ENCODE measurements at regions of chr9 and their contacts with region 1.

Region 1: GRCh38 chr9:77433675-77434445 is 214.3 kb downstream of the GNA14 start:
- DNase-seq: peak; percentile 84
- H3K4me3 ChIP-seq: no peak overlapping the region
- H3K27ac ChIP-seq: no peak overlapping the region
- H3K4me1 ChIP-seq: no peaks in the 10 kb centered on the region
- H3K27me3 ChIP-seq: no peaks in the 10 kb centered on the region
- CTCF ChIP-seq: peak; percentile 87 to 96 (median 92)
- EP300 ChIP-seq: no peak
- POLR2A ChIP-seq: no peak

Region 2: DNA sequence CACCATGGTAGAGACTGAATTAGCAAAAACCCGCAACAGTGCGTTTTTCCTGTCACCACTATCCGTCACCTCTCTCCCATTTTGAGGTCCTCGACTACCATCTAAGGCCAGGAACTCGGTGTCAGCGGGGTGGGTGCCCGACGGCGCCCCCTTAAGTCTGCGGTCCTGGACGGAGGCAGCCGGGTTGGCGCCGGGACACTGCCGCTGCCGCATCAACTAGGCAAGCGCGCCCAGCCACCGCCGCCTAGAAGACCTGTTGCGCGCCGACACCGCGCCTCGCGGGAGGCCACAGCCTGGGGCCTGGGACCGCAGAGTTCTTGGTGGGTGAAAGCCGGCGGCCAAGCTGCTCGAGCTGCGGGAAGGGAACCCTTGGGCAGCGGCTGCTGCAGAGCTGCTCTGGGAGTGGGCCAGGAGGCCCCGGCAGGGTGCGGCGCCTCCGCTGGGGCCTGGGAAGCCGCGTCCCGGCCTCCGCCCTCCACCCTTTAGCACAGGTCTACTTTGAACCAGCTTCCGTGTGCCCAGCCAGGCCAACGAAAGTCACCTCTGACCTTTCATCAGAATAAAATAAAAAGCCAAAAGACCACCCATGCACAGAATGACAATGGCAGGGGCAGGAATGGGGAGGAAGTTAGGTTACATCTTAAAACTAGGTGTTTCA is 410.9 kb before region 1 on chr9:
- intact Hi-C with region 1: no loop called
- DNase-seq: no peak
- H3K4me3 ChIP-seq: no peak overlapping the region
- H3K27ac ChIP-seq: no peak overlapping the region
- H3K4me1 ChIP-seq: peaks cover 0 to 45% (median 41%) of the 10 kb centered on the region in 4 donors
- H3K27me3 ChIP-seq: peaks cover 50 to 98% (median 74%) of the 10 kb centered on the region in 3 donors
- CTCF ChIP-seq: no peak
- EP300 ChIP-seq: no peak
- POLR2A ChIP-seq: no peak

Region 3: DNA sequence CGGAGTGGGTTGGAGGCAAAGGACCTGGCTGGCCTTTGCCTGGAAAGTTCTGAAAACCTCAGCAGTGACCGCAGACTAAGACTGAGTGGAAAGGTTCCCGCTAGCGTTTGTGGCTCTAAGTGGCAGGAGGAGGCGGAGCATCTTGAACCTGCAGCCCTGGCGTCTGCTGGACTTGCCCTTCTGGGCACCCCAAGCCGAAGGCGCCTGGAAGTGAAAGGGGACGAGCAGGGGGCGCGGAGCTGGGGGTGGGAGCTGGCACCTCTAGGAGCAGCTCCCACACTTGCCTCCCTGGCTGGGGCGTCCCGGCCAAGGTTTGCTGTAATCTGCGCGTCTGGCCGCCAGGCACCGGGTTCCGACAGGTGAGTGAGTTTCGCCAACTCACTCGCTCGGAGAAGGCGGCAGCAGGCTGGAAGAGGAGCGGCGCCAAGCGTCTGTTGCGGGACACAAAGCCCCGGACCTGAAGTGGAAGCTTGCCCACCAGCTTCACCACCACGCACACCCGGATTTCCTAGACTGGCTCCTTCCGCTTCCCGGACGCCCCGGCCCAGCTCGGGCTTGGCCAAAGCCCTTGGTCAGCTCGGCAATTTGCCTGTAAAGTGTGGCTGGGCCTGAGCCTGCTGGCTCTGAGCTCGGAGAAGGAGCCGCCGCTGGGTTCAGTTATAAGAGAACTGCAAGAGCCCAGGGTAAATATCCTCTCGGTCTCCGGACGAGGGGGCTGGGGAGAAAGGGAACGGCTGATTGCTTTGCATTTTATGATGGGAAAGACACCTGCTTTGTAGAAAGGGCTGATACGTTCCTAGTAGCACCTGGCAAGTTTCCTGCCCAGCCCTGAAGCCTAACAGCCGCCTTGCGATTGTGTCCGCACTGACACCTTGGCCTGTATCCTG is 214.6 kb after region 1 on chr9 and contains the start of gene GNA14:
- intact Hi-C with region 1: loop called (anchors 5 kb)
- DNase-seq: peak; percentile 82
- H3K4me3 ChIP-seq: peak within 1 kb of the TSS; percentile 49 to 69 (median 56)
- H3K27ac ChIP-seq: peak within 1 kb of the TSS; percentile 61 to 78 (median 68)
- H3K4me1 ChIP-seq: peaks cover 0 to 46% (median 26%) of the 10 kb centered on the region in 4 donors
- H3K27me3 ChIP-seq: peaks cover 0 to 20% (median 0%) of the 10 kb centered on the region in 3 donors
- CTCF ChIP-seq: no peak
- EP300 ChIP-seq: no peak
- POLR2A ChIP-seq: no peak
- total RNA-seq, gene GNA14: 5.0 to 29.2 (median 10.0) TPM

Region 4: DNA sequence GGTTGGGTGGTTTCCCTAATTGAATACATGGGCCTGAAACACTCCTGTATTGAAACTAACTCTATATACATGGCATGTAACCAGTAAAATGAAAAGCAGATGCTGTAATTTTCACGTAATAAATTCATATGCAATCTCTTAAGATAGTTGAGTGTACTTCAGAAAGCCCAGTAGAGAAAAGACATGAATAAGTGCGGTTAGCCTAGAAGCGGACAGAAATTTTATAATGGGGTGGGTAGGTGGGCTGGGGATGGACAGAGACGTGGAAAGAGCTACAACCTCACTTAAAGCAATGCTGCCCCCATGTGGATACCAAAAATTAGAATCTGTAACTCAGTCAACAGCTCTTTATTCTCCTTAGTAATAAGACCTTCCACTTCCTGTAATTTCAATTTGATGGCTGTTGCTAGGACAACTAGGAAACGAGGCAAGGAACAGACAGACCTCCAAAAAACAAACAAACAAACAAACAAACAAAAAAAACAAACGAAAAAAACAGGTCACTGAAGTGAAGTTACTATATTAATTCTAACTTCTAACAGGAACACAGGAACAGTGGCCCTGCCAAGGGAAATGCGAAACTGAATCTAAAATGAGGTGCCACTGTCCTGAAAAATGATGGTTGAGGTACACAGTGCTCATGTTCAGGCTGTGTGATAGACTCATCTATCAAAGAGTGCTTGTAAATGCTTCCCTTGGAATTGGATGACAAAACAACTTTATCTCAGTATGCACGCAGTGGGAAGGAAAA is 317.7 kb after region 1 on chr9:
- intact Hi-C with region 1: loop called (anchors 2 kb)
- DNase-seq: no peak
- H3K4me3 ChIP-seq: peak overlapping the region in 1 of 4 donors; percentile 5
- H3K27ac ChIP-seq: peak overlapping the region; percentile 15 to 68 (median 64)
- H3K4me1 ChIP-seq: peaks cover 0 to 55% (median 45%) of the 10 kb centered on the region in 4 donors
- H3K27me3 ChIP-seq: no peaks in the 10 kb centered on the region
- CTCF ChIP-seq: peak; percentile 42 to 59 (median 48)
- EP300 ChIP-seq: no peak
- POLR2A ChIP-seq: no peak

Region 5: DNA sequence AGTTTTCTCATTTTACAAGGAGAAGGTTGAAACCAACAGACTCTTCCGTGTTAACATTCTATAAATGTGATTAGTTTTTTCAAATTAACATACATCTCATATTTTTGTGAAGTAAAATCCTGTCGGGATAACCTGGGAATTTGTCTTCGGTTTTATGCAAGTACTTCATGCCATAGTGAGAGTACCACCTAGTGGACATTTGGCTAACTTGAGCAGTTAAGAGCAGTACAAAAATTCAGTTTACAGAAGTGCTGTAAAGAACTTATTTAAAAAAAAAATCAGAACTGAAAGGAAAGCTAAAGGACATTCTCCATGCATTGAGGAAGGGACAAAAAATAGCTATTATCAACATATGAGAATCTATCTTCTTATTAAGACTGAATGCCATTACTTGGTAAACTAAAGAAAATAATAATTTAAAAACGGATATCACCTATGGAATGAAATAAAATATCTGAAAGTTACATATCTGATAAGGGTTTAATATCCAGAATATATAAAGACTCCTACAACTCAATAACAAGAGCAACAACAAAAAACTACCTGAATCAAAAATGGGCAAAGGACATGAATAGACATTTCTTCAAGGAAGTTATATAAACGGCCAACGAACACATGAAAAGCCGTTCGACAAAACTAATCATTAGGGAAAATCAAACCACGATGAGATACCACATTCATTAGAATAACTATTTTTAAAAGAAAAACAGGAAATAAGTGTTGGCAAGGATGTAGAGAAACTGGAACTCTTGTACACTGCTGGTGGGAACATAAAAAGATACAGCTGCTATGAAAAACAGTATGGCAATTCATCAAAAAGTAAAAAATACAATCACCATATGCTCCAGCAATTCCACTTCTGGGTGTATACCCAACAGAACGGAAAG is 331.3 kb after region 1 on chr9:
- intact Hi-C with region 1: loop called (anchors 5 kb)
- DNase-seq: no peak
- H3K4me3 ChIP-seq: no peak overlapping the region
- H3K27ac ChIP-seq: no peak overlapping the region
- H3K4me1 ChIP-seq: peaks cover 0 to 14% (median 3%) of the 10 kb centered on the region in 4 donors
- H3K27me3 ChIP-seq: no peaks in the 10 kb centered on the region
- CTCF ChIP-seq: peak in 3 of 4 experiments; percentile 11 to 46 (median 30)
- EP300 ChIP-seq: no peak
- POLR2A ChIP-seq: no peak

Region 6: GRCh38 chr9:77848897-77849296 is 415.0 kb after region 1 on chr9:
- intact Hi-C with region 1: no loop called
- DNase-seq: peak; percentile 92
- H3K4me3 ChIP-seq: no peak overlapping the region
- H3K27ac ChIP-seq: peak overlapping the region; percentile 45 to 74 (median 62)
- H3K4me1 ChIP-seq: peaks cover 0 to 60% (median 39%) of the 10 kb centered on the region in 4 donors
- H3K27me3 ChIP-seq: no peaks in the 10 kb centered on the region
- CTCF ChIP-seq: no peak
- EP300 ChIP-seq: peak in 1 of 4 donors; percentile 3
- POLR2A ChIP-seq: no peak